ENCODE measurements at regions of chr5 and their contacts with region 1.

Region 1: GRCh38 chr5:14809369-14810155 is 62.0 kb downstream of the ANKH start:
- DNase-seq: peak; percentile 89
- H3K4me3 Mint-ChIP-seq: peak overlapping the region; percentile 55
- H3K27ac Mint-ChIP-seq: peak overlapping the region; percentile 69
- H3K4me1 Mint-ChIP-seq: peaks cover 53% of the 10 kb centered on the region
- H3K27me3 Mint-ChIP-seq: no peaks in the 10 kb centered on the region

Region 2: DNA sequence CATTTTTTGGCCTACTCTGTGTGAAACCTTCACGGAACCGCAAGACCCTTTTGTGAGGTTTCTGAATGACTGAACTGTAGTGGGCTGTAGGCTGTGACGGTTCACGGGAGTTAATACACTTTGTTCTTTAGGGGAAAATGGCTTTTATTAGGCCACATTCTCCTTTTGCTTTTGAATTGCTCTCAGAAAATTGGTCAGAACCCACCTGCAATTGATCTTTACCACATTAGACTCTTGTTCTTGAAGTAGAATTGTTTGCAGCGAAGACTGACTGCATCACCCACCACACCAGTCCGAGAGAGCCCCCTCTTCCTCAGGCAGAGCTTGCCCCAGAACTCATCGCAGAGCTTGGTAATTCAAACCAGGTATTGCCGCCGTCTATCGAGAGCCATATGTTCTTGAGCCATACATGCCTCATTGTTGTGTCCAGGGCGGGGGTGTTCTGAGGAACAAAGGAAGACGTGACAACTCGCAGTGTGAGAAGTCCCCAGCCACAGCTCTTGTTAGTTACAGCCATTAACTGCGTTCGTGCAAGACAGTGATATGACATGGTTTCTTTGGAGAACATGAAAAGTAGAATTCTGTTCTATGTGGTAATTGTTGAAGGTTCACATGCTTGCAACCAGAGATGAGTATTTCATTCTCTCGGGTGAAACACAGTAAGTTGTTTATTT is 394.4 kb before region 1 on chr5:
- CTCF ChIA-PET with region 1: no interaction called
- intact Hi-C with region 1: loop called (anchors 1 kb)
- DNase-seq: peak; percentile 43
- H3K4me3 Mint-ChIP-seq: peak overlapping the region; percentile 51
- H3K27ac Mint-ChIP-seq: peak overlapping the region; percentile 84
- H3K4me1 Mint-ChIP-seq: peaks cover 50% of the 10 kb centered on the region
- H3K27me3 Mint-ChIP-seq: peaks cover 2% of the 10 kb centered on the region

Region 3: DNA sequence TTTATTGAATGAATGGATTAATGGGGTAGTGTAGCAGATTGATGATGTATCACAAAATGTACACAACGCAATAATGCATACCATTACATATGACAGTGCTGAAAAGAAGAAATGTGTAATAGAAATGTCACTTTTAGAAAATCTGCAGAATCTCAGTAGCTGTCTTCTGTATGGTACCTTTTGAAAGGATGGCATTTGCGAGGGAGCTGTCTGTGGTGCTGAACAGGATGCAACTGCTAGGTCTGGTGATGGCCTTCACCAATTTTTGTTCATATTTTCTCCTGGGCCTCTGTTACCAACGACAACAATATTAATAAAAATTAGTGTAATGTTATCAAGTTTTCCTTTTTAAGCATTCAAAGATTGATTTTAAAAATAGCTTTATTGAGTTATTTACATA is 181.2 kb before region 1 on chr5:
- CTCF ChIA-PET with region 1: no interaction called
- intact Hi-C with region 1: no loop called
- DNase-seq: peak; percentile 75
- H3K4me3 Mint-ChIP-seq: no peak overlapping the region
- H3K27ac Mint-ChIP-seq: no peak overlapping the region
- H3K4me1 Mint-ChIP-seq: no peaks in the 10 kb centered on the region
- H3K27me3 Mint-ChIP-seq: no peaks in the 10 kb centered on the region

Region 4: DNA sequence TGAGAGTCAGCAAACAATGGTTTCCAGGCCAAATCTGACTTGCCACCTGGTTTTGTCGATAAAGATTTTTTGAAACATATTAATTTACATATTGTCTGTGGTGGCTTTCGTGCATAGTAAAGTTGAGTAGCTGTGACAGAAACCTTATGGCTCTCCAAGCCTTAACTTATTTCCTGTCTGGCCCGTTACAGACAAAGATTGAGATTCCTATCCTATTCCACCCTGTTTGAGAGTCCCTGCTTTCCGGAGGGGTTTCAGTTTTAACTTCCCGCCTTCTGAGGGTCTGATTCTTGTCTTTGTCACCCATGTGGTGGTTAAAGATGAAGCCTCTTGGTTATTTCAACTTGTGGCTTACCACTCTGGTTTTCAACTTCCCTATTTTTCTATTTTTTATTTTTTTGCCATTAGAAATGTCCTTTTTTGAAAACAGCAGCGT is 133.7 kb before region 1 on chr5:
- CTCF ChIA-PET with region 1: no interaction called
- intact Hi-C with region 1: loop called (anchors 1 kb)
- DNase-seq: no peak
- H3K4me3 Mint-ChIP-seq: peak overlapping the region; percentile 16
- H3K27ac Mint-ChIP-seq: peak overlapping the region; percentile 82
- H3K4me1 Mint-ChIP-seq: peaks cover 68% of the 10 kb centered on the region
- H3K27me3 Mint-ChIP-seq: no peaks in the 10 kb centered on the region

Region 5: DNA sequence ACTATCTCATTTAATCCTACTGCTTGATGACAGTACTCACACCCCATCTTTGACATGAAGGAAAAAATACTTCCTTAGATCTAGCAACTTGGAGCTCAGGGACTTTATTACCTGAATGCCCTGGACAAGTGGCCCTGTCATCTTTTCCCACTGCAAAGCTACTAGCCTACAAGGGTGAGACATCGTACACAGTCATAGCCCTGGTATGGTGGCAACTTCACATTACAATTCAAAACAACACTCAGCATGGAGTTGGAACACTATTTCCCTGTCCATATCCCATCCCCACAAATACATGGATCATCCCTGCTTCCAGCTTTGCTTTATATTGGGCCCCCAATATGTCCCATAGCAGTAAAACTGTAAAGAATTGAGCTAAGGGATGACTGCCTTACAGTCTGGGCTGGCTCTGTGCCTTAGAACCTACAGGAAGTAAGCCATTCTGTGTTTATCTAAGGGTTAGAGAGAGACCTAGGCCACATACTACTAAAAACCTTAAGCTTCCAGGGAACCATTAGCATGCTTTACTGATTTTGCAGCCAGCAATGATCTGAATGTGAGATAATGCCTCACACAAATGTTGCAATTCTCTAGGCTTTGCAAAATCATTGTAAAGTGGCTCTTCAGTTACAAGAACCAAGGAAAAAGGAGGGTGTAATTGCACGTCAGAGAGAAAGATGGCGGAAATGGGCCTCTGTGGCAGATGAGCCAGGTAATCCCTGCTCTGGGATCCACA is 89.2 kb before region 1 on chr5:
- CTCF ChIA-PET with region 1: no interaction called
- intact Hi-C with region 1: loop called (anchors 1 kb)
- DNase-seq: no peak
- H3K4me3 Mint-ChIP-seq: no peak overlapping the region
- H3K27ac Mint-ChIP-seq: no peak overlapping the region
- H3K4me1 Mint-ChIP-seq: peaks cover 51% of the 10 kb centered on the region
- H3K27me3 Mint-ChIP-seq: no peaks in the 10 kb centered on the region

Region 6: DNA sequence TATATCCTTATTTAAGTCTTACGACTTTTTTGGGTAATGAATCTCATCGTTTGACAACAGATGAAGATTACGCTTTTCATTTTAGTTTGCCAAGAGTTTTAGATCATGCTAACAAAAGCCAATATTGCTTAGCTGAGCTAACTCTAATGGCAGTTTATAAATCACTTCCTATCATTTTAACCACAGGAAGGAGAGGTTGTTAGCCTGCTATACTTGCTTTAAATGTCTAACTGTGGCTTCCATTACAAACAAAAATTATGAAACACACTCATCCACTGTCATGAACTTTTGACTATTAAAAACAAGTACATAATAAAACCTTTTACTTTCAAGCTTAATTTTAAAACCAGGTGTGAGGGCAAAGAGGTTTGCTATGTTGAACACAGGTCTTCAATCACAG is 115.8 kb after region 1 on chr5:
- CTCF ChIA-PET with region 1: no interaction called
- intact Hi-C with region 1: loop called (anchors 1 kb)
- DNase-seq: no peak
- H3K4me3 Mint-ChIP-seq: peak overlapping the region; percentile 40
- H3K27ac Mint-ChIP-seq: peak overlapping the region; percentile 86
- H3K4me1 Mint-ChIP-seq: peaks cover 58% of the 10 kb centered on the region
- H3K27me3 Mint-ChIP-seq: no peaks in the 10 kb centered on the region

Region 7: GRCh38 chr5:14937254-14937653 is 127.7 kb after region 1 on chr5:
- CTCF ChIA-PET with region 1: no interaction called
- intact Hi-C with region 1: no loop called
- DNase-seq: no peak
- H3K4me3 Mint-ChIP-seq: no peak overlapping the region
- H3K27ac Mint-ChIP-seq: no peak overlapping the region
- H3K4me1 Mint-ChIP-seq: peaks cover 9% of the 10 kb centered on the region
- H3K27me3 Mint-ChIP-seq: no peaks in the 10 kb centered on the region

Region 8: DNA sequence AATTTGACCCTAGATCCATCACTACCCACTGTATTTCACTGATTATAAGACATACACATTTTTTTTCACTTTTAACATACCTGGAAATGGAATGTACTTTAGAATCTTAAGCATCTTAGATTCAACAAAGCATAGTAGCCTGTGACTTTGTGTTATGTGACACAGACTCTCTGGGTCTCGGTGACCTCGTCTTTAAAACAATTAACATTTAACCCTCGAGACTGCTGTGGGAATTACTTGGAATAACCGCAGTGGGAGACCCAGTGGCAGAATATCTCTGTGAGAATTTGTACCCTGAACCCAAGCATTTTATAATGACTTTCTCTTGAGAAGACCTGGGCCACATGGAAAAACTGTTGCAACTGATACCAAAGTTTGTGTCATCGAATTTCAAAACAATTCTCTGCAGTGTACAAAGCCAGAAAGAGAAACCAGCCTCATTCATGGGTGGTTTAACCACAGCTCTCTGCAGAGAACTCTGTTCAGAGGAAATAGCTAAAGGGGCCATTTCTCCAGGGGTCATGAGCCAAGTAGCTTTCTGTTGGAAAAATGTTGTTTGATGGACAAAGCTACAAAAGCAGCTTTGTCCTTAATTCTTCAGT is 1817.2 kb after region 1 on chr5:
- CTCF ChIA-PET with region 1: no interaction called
- intact Hi-C with region 1: loop called (anchors 1 kb)
- DNase-seq: peak; percentile 66
- H3K4me3 Mint-ChIP-seq: no peak overlapping the region
- H3K27ac Mint-ChIP-seq: peak overlapping the region; percentile 77
- H3K4me1 Mint-ChIP-seq: peaks cover 46% of the 10 kb centered on the region
- H3K27me3 Mint-ChIP-seq: no peaks in the 10 kb centered on the region

Measured in activated naive CD4-positive, alpha-beta T cell treated with anti-CD3 and anti-CD28 coated beads for 36 hours (primary cell).